ENCODE measurements at regions of chr2 and their contacts with region 1.

Region 1: GRCh38 chr2:19488009-19488691 is 129.7 kb upstream of the OSR1 start:
- DNase-seq: peak; percentile 95
- ATAC-seq: peak; percentile 95
- H3K4me3 ChIP-seq: peak overlapping the region in 1 of 2 experiments; percentile 2; a peak in 1 of 4 replicates
- H3K27ac ChIP-seq: no peak overlapping the region; the same call in 1 of the 2 replicates
- H3K4me1 ChIP-seq: peaks cover 12 to 21% of the 10 kb centered on the region in 2 experiments
- H3K27me3 ChIP-seq: peaks cover 8% of the 10 kb centered on the region; the same call in 1 of the 2 replicates
- CTCF ChIP-seq: no peak
- POLR2A ChIP-seq: no peak
- RAD21 ChIP-seq: peak; percentile 30

Region 2: DNA sequence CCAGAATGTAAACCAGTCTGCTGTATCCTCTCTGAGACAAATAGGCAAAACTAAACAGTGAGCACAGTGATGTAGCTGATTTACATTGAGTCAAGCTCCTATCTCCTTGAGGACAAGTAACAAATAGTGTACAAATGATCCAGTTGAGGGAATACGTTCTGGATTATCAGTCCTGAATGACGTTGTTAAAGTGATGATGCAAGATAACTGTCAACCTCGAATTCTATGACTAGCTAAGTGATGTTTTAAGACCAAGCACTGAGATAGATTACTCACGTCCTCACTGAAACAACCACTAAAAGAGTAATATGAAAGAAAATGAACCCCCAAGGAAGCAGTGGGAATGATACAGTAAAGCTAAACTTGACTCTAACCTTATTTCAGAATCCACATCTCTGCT is 1781.3 kb before region 1 on chr2:
- CTCF ChIA-PET with region 1: no interaction called
- POLR2A ChIA-PET with region 1: no interaction called
- RAD21 ChIA-PET with region 1: no interaction called
- intact Hi-C with region 1: no loop called
- DNase-seq: no peak
- ATAC-seq: no peak
- H3K4me3 ChIP-seq: no peak overlapping the region
- H3K27ac ChIP-seq: no peak overlapping the region
- H3K4me1 ChIP-seq: no peaks in the 10 kb centered on the region
- H3K27me3 ChIP-seq: no peaks in the 10 kb centered on the region
- CTCF ChIP-seq: no peak
- POLR2A ChIP-seq: no peak
- RAD21 ChIP-seq: no peak

Region 3: GRCh38 chr2:19538405-19538963 is 50.3 kb after region 1 on chr2:
- CTCF ChIA-PET with region 1: no interaction called
- POLR2A ChIA-PET with region 1: interaction called, 6 read pairs
- RAD21 ChIA-PET with region 1: no interaction called
- intact Hi-C with region 1: loop called (anchors 5 kb)
- DNase-seq: peak; percentile 88
- ATAC-seq: peak; percentile 88
- H3K4me3 ChIP-seq: peak overlapping the region in 1 of 2 experiments; percentile 35; a peak in 2 of 4 replicates
- H3K27ac ChIP-seq: peak overlapping the region; percentile 36; the same call in 1 of the 2 replicates
- H3K4me1 ChIP-seq: peaks cover 20 to 56% of the 10 kb centered on the region in 2 experiments
- H3K27me3 ChIP-seq: no peaks in the 10 kb centered on the region
- CTCF ChIP-seq: no peak
- POLR2A ChIP-seq: no peak
- RAD21 ChIP-seq: 0 out of 2 replicates have a peak, but pooled peaks have one; percentile 20